Mammary epithelial cell (primary cell): ENCODE measurements at regions of chr15 and their contacts with region 1.

Region 1: DNA sequence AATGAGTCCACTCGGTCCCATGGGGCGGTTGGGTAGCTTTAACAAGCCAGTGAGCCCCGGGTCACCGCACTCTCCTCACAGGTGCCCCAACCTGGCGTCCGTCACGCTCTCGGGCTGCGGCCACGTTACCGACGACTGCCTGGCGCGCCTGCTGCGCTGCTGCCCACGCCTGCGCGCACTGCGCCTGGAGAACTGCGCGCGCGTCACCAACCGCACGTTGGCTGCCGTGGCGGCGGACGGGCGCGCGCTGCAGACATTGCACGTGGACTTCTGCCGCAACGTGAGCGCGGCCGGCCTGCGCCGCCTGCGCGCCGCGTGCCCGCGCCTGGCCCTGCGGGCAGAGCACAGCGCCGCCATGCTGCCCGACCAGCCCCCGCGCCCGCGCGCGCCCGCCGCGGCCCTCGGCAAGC is 3.4 kb downstream of the FBXL22 start:
- DNase-seq: peak; percentile 88
- H3K4me3 ChIP-seq: peak overlapping the region; percentile 64 to 76 (median 72)
- H3K27ac ChIP-seq: peak overlapping the region; percentile 38
- H3K4me1 ChIP-seq: peaks cover 32% of the 10 kb centered on the region
- H3K27me3 ChIP-seq: no peaks in the 10 kb centered on the region
- CTCF ChIP-seq: no peak

Region 2: GRCh38 chr15:63288778-63289378 is 311.7 kb before region 1 on chr15:
- CTCF ChIA-PET with region 1: no interaction called
- dilution Hi-C with region 1: no loop called
- in situ Hi-C with region 1: loop called in 1 of 2 experiments (anchors 25 kb)
- intact Hi-C with region 1: loop called (anchors 2 kb)
- DNase-seq: peak; percentile 36
- H3K4me3 ChIP-seq: no peak overlapping the region
- H3K27ac ChIP-seq: no peak overlapping the region
- H3K4me1 ChIP-seq: peaks cover 6% of the 10 kb centered on the region
- H3K27me3 ChIP-seq: no peaks in the 10 kb centered on the region
- CTCF ChIP-seq: peak; percentile 59 to 72

Region 3: GRCh38 chr15:63487076-63487757 is 113.4 kb before region 1 on chr15:
- CTCF ChIA-PET with region 1: interaction called, 3 read pairs
- dilution Hi-C with region 1: no loop called
- in situ Hi-C with region 1: no loop called
- intact Hi-C with region 1: loop called (anchors 1 kb)
- DNase-seq: peak; percentile 58
- H3K4me3 ChIP-seq: no peak overlapping the region
- H3K27ac ChIP-seq: no peak overlapping the region
- H3K4me1 ChIP-seq: peaks cover 10% of the 10 kb centered on the region
- H3K27me3 ChIP-seq: no peaks in the 10 kb centered on the region
- CTCF ChIP-seq: peak; percentile 90 to 96

Region 4: GRCh38 chr15:63582718-63583426 is 17.7 kb before region 1 on chr15:
- CTCF ChIA-PET with region 1: no interaction called
- dilution Hi-C with region 1: no loop called
- in situ Hi-C with region 1: no loop called
- intact Hi-C with region 1: no loop called
- DNase-seq: peak; percentile 82
- H3K4me3 ChIP-seq: no peak overlapping the region
- H3K27ac ChIP-seq: peak overlapping the region; percentile 26
- H3K4me1 ChIP-seq: no peaks in the 10 kb centered on the region
- H3K27me3 ChIP-seq: no peaks in the 10 kb centered on the region
- CTCF ChIP-seq: no peak

Region 5: GRCh38 chr15:63626955-63627354 is 26.3 kb after region 1 on chr15:
- CTCF ChIA-PET with region 1: interaction called, 17 read pairs
- dilution Hi-C with region 1: no loop called
- in situ Hi-C with region 1: no loop called
- intact Hi-C with region 1: no loop called
- DNase-seq: no peak
- H3K4me3 ChIP-seq: no peak overlapping the region
- H3K27ac ChIP-seq: no peak overlapping the region
- H3K4me1 ChIP-seq: no peaks in the 10 kb centered on the region
- H3K27me3 ChIP-seq: no peaks in the 10 kb centered on the region
- CTCF ChIP-seq: no peak